ENCODE measurements at regions of chr11 and their contacts with region 1.

Region 1: GRCh38 chr11:72222907-72223614 is 1.5 kb upstream of the INPPL1 start:
- DNase-seq: peak; percentile 91 to 95 (median 92)
- H3K4me3 ChIP-seq: peak overlapping the region; percentile 48 to 83
- H3K4me3 Mint-ChIP-seq: peak overlapping the region; percentile 89 to 96 (median 91)
- H3K27ac ChIP-seq: peak overlapping the region; percentile 72
- H3K27ac Mint-ChIP-seq: peak overlapping the region; percentile 89 to 96 (median 95)
- H3K4me1 ChIP-seq: peaks cover 19% of the 10 kb centered on the region
- H3K4me1 Mint-ChIP-seq: peaks cover 8 to 31% (median 19%) of the 10 kb centered on the region in 4 donors
- H3K27me3 ChIP-seq: no peaks in the 10 kb centered on the region
- H3K27me3 Mint-ChIP-seq: peaks cover 0 to 7% of the 10 kb centered on the region in 2 donors

Region 2: GRCh38 chr11:71787098-71787823 is 435.8 kb before region 1 on chr11:
- CTCF ChIA-PET with region 1: no interaction called
- POLR2A ChIA-PET with region 1: interaction called, 3 read pairs
- intact Hi-C with region 1: loop called (anchors 5 kb)
- DNase-seq: peak; percentile 89 to 97 (median 95)
- H3K4me3 ChIP-seq: peak overlapping the region in 1 of 2 donors; percentile 91
- H3K4me3 Mint-ChIP-seq: peak overlapping the region; percentile 93 to 99 (median 96)
- H3K27ac ChIP-seq: peak overlapping the region; percentile 65
- H3K27ac Mint-ChIP-seq: peak overlapping the region; percentile 87 to 100 (median 99)
- H3K4me1 ChIP-seq: peaks cover 3% of the 10 kb centered on the region
- H3K4me1 Mint-ChIP-seq: peaks cover 10 to 18% (median 13%) of the 10 kb centered on the region in 4 donors
- H3K27me3 ChIP-seq: no peaks in the 10 kb centered on the region
- H3K27me3 Mint-ChIP-seq: no peaks in the 10 kb centered on the region

Region 3: DNA sequence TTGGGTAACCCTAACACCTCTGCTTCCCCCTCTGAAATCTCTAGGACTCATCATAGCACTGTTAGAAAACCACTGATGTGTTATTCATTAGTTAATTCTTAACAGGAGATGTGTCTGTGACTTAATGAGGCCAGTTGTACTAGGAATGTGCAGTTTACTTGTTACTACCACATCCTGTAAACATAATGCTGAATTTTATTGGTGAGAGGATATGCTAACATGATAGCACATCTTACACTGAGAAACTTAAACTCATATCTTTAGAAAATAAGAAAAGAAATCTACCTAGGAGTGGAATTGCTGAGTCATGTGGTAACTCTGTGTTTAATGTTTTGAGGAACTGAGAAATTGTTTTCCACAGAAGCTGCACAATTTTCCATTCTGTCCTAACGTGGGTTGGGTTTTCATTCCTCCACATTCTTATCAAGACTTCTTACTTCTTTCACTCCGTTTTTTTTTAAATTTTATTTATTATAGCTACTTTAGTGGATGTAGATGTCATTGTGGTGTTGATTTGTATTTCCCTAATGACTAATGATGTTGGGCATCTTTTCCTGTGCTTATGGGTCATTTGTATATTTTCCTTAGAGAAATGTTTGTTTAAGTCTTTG is 260.5 kb before region 1 on chr11:
- CTCF ChIA-PET with region 1: no interaction called
- POLR2A ChIA-PET with region 1: no interaction called
- intact Hi-C with region 1: no loop called
- DNase-seq: no peak
- H3K4me3 ChIP-seq: no peak overlapping the region
- H3K4me3 Mint-ChIP-seq: no peak overlapping the region
- H3K27ac ChIP-seq: no peak overlapping the region
- H3K27ac Mint-ChIP-seq: peak overlapping the region in 2 of 7 donors; percentile 65 to 77
- H3K4me1 ChIP-seq: no peaks in the 10 kb centered on the region
- H3K4me1 Mint-ChIP-seq: peaks cover 0 to 7% (median 1%) of the 10 kb centered on the region in 4 donors
- H3K27me3 ChIP-seq: no peaks in the 10 kb centered on the region
- H3K27me3 Mint-ChIP-seq: no peaks in the 10 kb centered on the region

Region 4: GRCh38 chr11:72080256-72080974 is 142.6 kb before region 1 on chr11 and contains the starts of genes LRRC51 and NUMA1:
- CTCF ChIA-PET with region 1: no interaction called
- POLR2A ChIA-PET with region 1: interaction called, 4 read pairs
- intact Hi-C with region 1: loop called (anchors 1 kb)
- DNase-seq: peak; percentile 98 to 100 (median 99)
- H3K4me3 ChIP-seq: peak within 1 kb of the TSS; percentile 74 to 79
- H3K4me3 Mint-ChIP-seq: peak within 1 kb of the TSS; percentile 89 to 96 (median 93)
- H3K27ac ChIP-seq: peak within 1 kb of the TSS; percentile 75
- H3K27ac Mint-ChIP-seq: peak within 1 kb of the TSS; percentile 91 to 100 (median 99)
- H3K4me1 ChIP-seq: peaks cover 27% of the 10 kb centered on the region
- H3K4me1 Mint-ChIP-seq: peaks cover 31 to 53% (median 38%) of the 10 kb centered on the region in 4 donors
- H3K27me3 ChIP-seq: no peaks in the 10 kb centered on the region
- H3K27me3 Mint-ChIP-seq: no peaks in the 10 kb centered on the region
- total RNA-seq, gene LRRC51: 4.2 to 4.5 TPM
- total RNA-seq, gene NUMA1: 376 to 380 TPM

Region 5: GRCh38 chr11:72179804-72180396 is 43.2 kb before region 1 on chr11:
- CTCF ChIA-PET with region 1: interaction called, 18 read pairs
- POLR2A ChIA-PET with region 1: no interaction called
- intact Hi-C with region 1: loop called (anchors 1 kb)
- DNase-seq: no peak
- H3K4me3 ChIP-seq: no peak overlapping the region
- H3K4me3 Mint-ChIP-seq: no peak overlapping the region
- H3K27ac ChIP-seq: no peak overlapping the region
- H3K27ac Mint-ChIP-seq: no peak overlapping the region
- H3K4me1 ChIP-seq: no peaks in the 10 kb centered on the region
- H3K4me1 Mint-ChIP-seq: peaks cover 0 to 4% (median 3%) of the 10 kb centered on the region in 4 donors
- H3K27me3 ChIP-seq: no peaks in the 10 kb centered on the region
- H3K27me3 Mint-ChIP-seq: peaks cover 10 to 12% of the 10 kb centered on the region in 2 donors

Region 6: GRCh38 chr11:72238040-72238450 is 15.0 kb after region 1 on chr11:
- CTCF ChIA-PET with region 1: interaction called, 40 read pairs
- POLR2A ChIA-PET with region 1: interaction called, 36 read pairs
- intact Hi-C with region 1: loop called (anchors 1 kb)
- DNase-seq: peak in 4 of 5 donors; percentile 43 to 49 (median 46)
- H3K4me3 ChIP-seq: no peak overlapping the region
- H3K4me3 Mint-ChIP-seq: no peak overlapping the region
- H3K27ac ChIP-seq: no peak overlapping the region
- H3K27ac Mint-ChIP-seq: no peak overlapping the region
- H3K4me1 ChIP-seq: peaks cover 18% of the 10 kb centered on the region
- H3K4me1 Mint-ChIP-seq: peaks cover 12 to 28% (median 19%) of the 10 kb centered on the region in 4 donors
- H3K27me3 ChIP-seq: peaks cover 21% of the 10 kb centered on the region
- H3K27me3 Mint-ChIP-seq: peaks cover 25 to 26% of the 10 kb centered on the region in 2 donors

Region 7: DNA sequence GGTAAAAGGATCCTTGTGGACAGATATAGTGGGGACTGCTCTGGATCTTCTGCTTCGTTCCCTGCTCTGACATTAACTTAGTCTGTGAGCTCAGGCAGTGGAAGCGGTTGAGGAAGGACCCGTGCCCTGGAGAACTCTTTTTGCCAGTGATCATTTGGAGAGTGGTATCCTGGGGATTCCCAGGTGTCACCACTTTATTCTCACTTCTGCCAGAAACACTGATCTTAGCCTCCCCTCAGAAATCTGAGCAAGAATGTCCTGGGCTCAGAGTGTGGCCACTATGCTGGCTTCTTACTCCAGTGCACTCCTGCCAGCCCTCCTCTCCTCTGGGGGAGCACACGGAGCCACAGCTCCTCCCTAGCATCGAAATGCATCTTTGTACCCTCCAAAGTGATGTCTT is 28.6 kb after region 1 on chr11:
- CTCF ChIA-PET with region 1: no interaction called
- POLR2A ChIA-PET with region 1: no interaction called
- intact Hi-C with region 1: no loop called
- DNase-seq: no peak
- H3K4me3 ChIP-seq: no peak overlapping the region
- H3K4me3 Mint-ChIP-seq: no peak overlapping the region
- H3K27ac ChIP-seq: no peak overlapping the region
- H3K27ac Mint-ChIP-seq: no peak overlapping the region
- H3K4me1 ChIP-seq: no peaks in the 10 kb centered on the region
- H3K4me1 Mint-ChIP-seq: no peaks in the 10 kb centered on the region
- H3K27me3 ChIP-seq: no peaks in the 10 kb centered on the region
- H3K27me3 Mint-ChIP-seq: peaks cover 8 to 20% of the 10 kb centered on the region in 2 donors

Measured in CD4-positive, alpha-beta memory T cell (primary cell).